Naive thymus-derived CD4-positive, alpha-beta T cell (primary cell): ENCODE measurements at regions of chr1 and their contacts with region 1.

Region 1: GRCh38 chr1:2194898-2195673 is 514 bp upstream of the FAAP20 start:
- DNase-seq: peak; percentile 85 to 98 (median 95)
- ATAC-seq: peak; percentile 85
- H3K4me3 ChIP-seq: peak overlapping the region; percentile 89
- H3K4me3 Mint-ChIP-seq: peak overlapping the region; percentile 71 to 91 (median 86)
- H3K27ac ChIP-seq: peak overlapping the region; percentile 88
- H3K27ac Mint-ChIP-seq: peak overlapping the region; percentile 52 to 94 (median 92)
- H3K4me1 ChIP-seq: peaks cover 22 to 33% of the 10 kb centered on the region in 2 donors
- H3K4me1 Mint-ChIP-seq: peaks cover 15 to 34% (median 26%) of the 10 kb centered on the region in 7 donors
- H3K27me3 ChIP-seq: no peaks in the 10 kb centered on the region
- H3K27me3 Mint-ChIP-seq: no peaks in the 10 kb centered on the region

Region 2: DNA sequence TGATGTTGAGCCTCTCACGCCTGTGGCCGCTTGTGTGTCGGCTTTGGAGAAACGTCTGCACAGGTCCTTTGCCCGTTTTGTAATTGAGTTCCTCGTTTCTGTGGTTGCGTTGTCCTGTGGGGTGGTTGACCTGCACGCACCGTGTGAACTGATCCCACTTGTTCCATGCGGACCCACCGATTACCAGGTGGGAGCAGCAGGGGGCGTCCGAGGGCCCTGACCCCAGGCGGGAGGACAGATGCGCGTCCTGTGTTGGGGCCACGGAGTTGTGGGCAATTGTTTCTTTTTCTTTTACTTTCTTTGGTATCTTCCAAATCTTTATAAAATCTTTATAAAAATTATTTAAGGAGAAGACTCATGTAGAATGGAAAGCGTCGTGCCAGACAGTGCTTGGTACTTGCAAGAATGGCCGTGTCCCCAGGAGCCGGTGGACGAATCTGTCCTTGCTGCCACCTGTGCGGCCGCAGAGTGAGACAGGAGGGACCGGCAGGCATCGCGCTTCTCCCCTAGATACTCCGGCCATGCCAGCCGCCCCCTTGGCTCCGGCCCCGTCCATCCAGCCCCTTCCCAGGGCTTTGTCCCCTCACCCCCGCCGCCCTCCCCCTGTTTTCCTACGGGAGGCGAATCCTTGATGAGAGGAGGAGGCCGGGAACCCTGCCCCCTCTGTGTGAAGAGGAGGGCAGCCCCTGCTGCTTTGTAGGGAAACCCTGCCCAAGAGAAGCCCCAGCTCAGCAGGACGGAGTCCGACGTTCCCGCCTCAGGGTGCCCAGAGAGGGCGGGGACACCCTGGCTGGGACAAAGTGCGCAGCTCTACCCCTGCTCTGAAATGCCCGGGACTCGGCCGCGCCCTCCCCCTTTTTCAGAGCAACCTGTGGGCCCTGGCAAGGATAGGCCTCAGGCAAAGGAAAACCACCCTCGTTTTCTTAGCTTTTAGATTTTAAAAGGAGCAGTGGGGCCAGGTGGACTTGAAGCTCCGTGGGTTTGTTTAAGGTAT is 103.2 kb before region 1 on chr1:
- CTCF ChIA-PET with region 1: no interaction called
- POLR2A ChIA-PET with region 1: no interaction called
- intact Hi-C with region 1: no loop called
- DNase-seq: peak in 7 of 9 donors; percentile 11 to 50 (median 29)
- ATAC-seq: peak; percentile 72
- H3K4me3 ChIP-seq: no peak overlapping the region
- H3K4me3 Mint-ChIP-seq: peak overlapping the region in 1 of 10 donors; percentile 38
- H3K27ac ChIP-seq: no peak overlapping the region
- H3K27ac Mint-ChIP-seq: no peak overlapping the region
- H3K4me1 ChIP-seq: no peaks in the 10 kb centered on the region
- H3K4me1 Mint-ChIP-seq: peaks cover 0 to 10% (median 4%) of the 10 kb centered on the region in 7 donors
- H3K27me3 ChIP-seq: no peaks in the 10 kb centered on the region
- H3K27me3 Mint-ChIP-seq: no peaks in the 10 kb centered on the region

Region 3: DNA sequence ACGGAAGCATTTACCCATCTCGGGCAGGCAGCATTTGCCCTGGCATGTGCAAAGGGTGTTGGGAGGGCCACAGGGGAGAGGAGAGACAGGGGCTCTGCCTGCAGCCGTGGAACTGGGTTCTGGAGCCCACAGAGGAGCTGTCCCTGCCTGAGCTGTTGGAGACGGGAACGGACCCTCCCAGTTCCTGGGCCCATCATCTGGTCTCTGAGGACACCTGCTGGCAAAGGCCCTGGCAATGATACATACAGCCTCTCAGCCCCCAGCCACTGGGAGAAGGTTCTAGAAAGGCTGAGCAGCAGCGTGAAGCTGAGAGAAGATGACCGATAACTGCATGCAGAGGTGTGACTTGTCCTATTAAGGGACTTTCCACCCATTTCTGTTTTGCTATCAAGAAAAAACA is 31.9 kb before region 1 on chr1:
- CTCF ChIA-PET with region 1: no interaction called
- POLR2A ChIA-PET with region 1: no interaction called
- intact Hi-C with region 1: no loop called
- DNase-seq: peak in 1 of 9 donors; percentile 8
- ATAC-seq: no peak
- H3K4me3 ChIP-seq: no peak overlapping the region
- H3K4me3 Mint-ChIP-seq: peak overlapping the region in 1 of 10 donors; percentile 15
- H3K27ac ChIP-seq: no peak overlapping the region
- H3K27ac Mint-ChIP-seq: peak overlapping the region in 3 of 9 donors; percentile 41 to 76 (median 62)
- H3K4me1 ChIP-seq: no peaks in the 10 kb centered on the region
- H3K4me1 Mint-ChIP-seq: peaks cover 3 to 14% (median 9%) of the 10 kb centered on the region in 7 donors
- H3K27me3 ChIP-seq: no peaks in the 10 kb centered on the region
- H3K27me3 Mint-ChIP-seq: no peaks in the 10 kb centered on the region

Region 4: GRCh38 chr1:2205191-2205952 is 10.3 kb after region 1 on chr1:
- CTCF ChIA-PET with region 1: interaction called, 5 read pairs
- POLR2A ChIA-PET with region 1: interaction called, 23 read pairs
- intact Hi-C with region 1: loop called in 1 of 2 experiments (anchors 1 kb)
- DNase-seq: peak; percentile 86 to 94 (median 93)
- ATAC-seq: peak; percentile 98
- H3K4me3 ChIP-seq: peak overlapping the region; percentile 70
- H3K4me3 Mint-ChIP-seq: peak overlapping the region; percentile 53 to 79 (median 68)
- H3K27ac ChIP-seq: peak overlapping the region; percentile 60
- H3K27ac Mint-ChIP-seq: peak overlapping the region in 5 of 9 donors; percentile 17 to 65 (median 56)
- H3K4me1 ChIP-seq: peaks cover 0 to 6% of the 10 kb centered on the region in 2 donors
- H3K4me1 Mint-ChIP-seq: peaks cover 0 to 9% (median 4%) of the 10 kb centered on the region in 7 donors
- H3K27me3 ChIP-seq: no peaks in the 10 kb centered on the region
- H3K27me3 Mint-ChIP-seq: peaks cover 0 to 4% (median 0%) of the 10 kb centered on the region in 5 donors

Region 5: GRCh38 chr1:2255420-2256369 is 60.6 kb after region 1 on chr1:
- CTCF ChIA-PET with region 1: interaction called, 7 read pairs
- POLR2A ChIA-PET with region 1: interaction called, 7 read pairs
- intact Hi-C with region 1: loop called (anchors 1 kb)
- DNase-seq: peak; percentile 59 to 99 (median 95)
- ATAC-seq: peak; percentile 79
- H3K4me3 ChIP-seq: peak overlapping the region; percentile 0
- H3K4me3 Mint-ChIP-seq: no peak overlapping the region
- H3K27ac ChIP-seq: peak overlapping the region; percentile 98
- H3K27ac Mint-ChIP-seq: no peak overlapping the region
- H3K4me1 ChIP-seq: peaks cover 52 to 70% of the 10 kb centered on the region in 2 donors
- H3K4me1 Mint-ChIP-seq: peaks cover 27 to 62% (median 51%) of the 10 kb centered on the region in 7 donors
- H3K27me3 ChIP-seq: no peaks in the 10 kb centered on the region
- H3K27me3 Mint-ChIP-seq: no peaks in the 10 kb centered on the region

Region 6: DNA sequence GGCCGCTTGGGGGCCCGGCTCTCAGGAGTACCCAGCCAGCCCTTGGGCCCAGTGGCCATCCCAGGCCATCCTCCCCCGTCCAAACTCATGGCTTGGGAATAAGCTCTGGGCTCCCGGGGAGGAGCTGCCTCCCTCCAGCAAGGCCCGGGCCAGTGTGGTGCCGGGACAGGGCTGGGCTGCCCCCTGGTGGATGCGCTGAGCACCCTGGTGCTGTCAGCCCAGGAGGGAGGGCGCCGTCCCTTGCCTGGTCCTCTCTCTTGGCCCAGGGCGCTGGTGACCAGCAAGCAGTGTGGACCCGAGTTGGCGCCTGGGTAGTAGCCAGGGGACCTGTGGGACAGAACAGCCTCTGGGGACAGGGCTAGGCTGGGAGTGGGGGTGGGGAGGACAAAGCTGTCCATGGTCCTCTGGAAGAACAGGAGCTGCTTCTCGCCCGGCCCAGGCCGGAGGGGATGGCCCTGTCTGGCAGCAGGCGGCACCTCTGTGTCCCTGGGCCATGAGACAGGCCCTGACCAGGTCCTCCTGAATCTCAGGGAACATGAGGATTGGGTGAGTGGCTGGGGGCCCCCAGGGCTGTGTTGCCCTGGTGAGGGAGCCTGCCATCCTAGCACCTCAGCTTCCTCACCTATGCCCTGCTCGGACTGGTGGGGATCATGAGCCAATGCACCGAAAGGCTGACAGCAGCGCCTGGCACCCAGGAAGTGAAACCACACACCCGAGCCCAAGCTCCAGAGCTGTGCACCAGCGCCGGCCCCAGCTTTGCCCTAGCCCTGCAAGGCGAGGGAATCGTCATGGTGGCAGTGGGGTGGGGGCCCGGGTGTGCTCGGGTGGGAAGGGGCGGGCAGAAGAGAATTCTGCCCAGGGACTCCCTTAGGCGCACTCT is 186.9 kb after region 1 on chr1:
- CTCF ChIA-PET with region 1: interaction called, 78 read pairs
- POLR2A ChIA-PET with region 1: interaction called, 29 read pairs
- intact Hi-C with region 1: loop called (anchors 1 kb)
- DNase-seq: peak; percentile 55 to 83 (median 71)
- ATAC-seq: peak; percentile 97
- H3K4me3 ChIP-seq: no peak overlapping the region
- H3K4me3 Mint-ChIP-seq: no peak overlapping the region
- H3K27ac ChIP-seq: no peak overlapping the region
- H3K27ac Mint-ChIP-seq: no peak overlapping the region
- H3K4me1 ChIP-seq: peaks cover 6 to 7% of the 10 kb centered on the region in 2 donors
- H3K4me1 Mint-ChIP-seq: peaks cover 0 to 4% (median 0%) of the 10 kb centered on the region in 7 donors
- H3K27me3 ChIP-seq: no peaks in the 10 kb centered on the region
- H3K27me3 Mint-ChIP-seq: no peaks in the 10 kb centered on the region

Region 7: GRCh38 chr1:2525920-2526823 is 331.1 kb after region 1 on chr1 and contains the start of gene PANK4:
- CTCF ChIA-PET with region 1: no interaction called
- POLR2A ChIA-PET with region 1: interaction called, 6 read pairs
- intact Hi-C with region 1: loop called in 1 of 2 experiments (anchors 1 kb)
- DNase-seq: peak; percentile 80 to 90 (median 89)
- ATAC-seq: peak; percentile 95
- H3K4me3 ChIP-seq: peak within 1 kb of the TSS; percentile 65
- H3K4me3 Mint-ChIP-seq: peak within 1 kb of the TSS; percentile 88 to 100 (median 94)
- H3K27ac ChIP-seq: peak within 1 kb of the TSS; percentile 81
- H3K27ac Mint-ChIP-seq: peak within 1 kb of the TSS; percentile 87 to 98 (median 96)
- H3K4me1 ChIP-seq: peaks cover 44 to 47% of the 10 kb centered on the region in 2 donors
- H3K4me1 Mint-ChIP-seq: peaks cover 32 to 57% (median 44%) of the 10 kb centered on the region in 7 donors
- H3K27me3 ChIP-seq: peaks cover 4 to 7% of the 10 kb centered on the region in 2 donors
- H3K27me3 Mint-ChIP-seq: peaks cover 0 to 27% (median 0%) of the 10 kb centered on the region in 5 donors
- total RNA-seq, gene PANK4: 55.8 to 91.2 (median 72.6) TPM

Region 8: DNA sequence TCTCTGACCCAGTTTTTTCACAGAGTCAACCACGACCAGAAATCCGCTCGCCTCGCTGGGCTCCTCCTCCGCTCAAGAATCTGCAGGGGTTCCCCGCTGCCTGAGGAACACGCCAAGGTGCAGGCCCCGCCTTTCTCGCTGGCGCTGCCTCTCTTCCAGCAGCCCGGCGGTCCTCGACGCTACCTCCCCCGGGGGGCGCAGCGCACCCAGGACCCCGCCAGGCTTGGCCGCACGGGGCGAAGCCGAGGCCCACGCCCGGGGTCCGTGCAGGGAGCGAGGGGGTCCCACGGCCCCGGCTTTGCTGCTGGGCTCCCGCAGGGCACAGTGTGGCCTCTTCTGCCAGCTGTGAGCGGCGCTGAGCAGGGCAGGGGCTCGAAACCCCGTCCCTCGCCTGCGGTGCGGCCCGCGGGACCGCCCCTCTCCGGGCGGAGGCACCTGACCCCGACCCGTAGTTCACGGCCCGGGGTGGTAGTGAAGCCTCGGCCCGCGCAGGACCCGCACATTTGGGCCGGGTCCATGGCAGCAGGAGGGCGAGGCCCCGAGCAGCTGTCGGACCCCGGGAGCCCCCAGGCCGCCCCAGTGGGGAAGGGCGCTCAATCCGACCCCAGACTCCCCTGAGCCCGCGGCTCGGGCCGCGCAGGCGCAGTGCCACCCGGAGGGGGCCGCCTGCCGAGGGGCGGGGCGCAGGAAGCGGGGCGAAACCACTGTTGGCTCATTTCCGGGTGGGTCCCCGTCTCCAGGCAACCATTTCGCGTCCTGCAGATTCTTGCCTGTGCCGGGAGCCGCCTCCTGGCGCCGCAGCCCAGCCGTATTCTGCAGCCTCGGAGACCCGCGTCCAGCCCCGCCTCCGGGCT is 447.7 kb after region 1 on chr1:
- CTCF ChIA-PET with region 1: no interaction called
- POLR2A ChIA-PET with region 1: no interaction called
- intact Hi-C with region 1: loop called in 1 of 2 experiments (anchors 10 kb)
- DNase-seq: peak; percentile 92 to 97 (median 96)
- ATAC-seq: peak; percentile 89
- H3K4me3 ChIP-seq: peak overlapping the region; percentile 87
- H3K4me3 Mint-ChIP-seq: peak overlapping the region; percentile 85 to 96 (median 88)
- H3K27ac ChIP-seq: peak overlapping the region; percentile 97
- H3K27ac Mint-ChIP-seq: peak overlapping the region in 8 of 9 donors; percentile 76 to 93 (median 86)
- H3K4me1 ChIP-seq: peaks cover 9% of the 10 kb centered on the region in 2 donors
- H3K4me1 Mint-ChIP-seq: peaks cover 6 to 19% (median 15%) of the 10 kb centered on the region in 7 donors
- H3K27me3 ChIP-seq: no peaks in the 10 kb centered on the region
- H3K27me3 Mint-ChIP-seq: peaks cover 0 to 3% (median 0%) of the 10 kb centered on the region in 5 donors